Posterior cingulate gyrus (tissue), 11 donors: ENCODE measurements at regions of chr17 and their contacts with region 1.

Region 1: GRCh38 chr17:17206124-17206912 is at the start of gene PLD6:
- DNase-seq: peak; percentile 46 to 96 (median 64)

Region 2: DNA sequence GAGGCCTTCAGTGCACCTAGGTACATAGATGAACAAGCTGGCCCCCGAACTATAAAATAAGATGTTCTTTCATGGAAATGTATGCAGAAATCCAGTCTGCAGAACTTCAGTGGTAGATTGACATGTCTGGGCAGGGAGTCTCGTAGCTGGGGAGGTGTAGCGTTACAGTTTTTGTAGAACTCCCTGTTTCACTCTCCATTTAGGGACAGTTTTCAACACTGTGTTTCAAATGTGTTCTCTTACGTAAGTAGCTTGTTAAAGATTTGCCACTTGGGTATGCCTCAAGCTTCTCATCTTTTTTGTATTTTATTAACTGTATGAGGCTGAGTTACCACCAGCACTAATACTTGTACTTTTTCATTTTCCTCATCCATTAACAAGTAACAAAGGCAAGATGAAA is 46.7 kb before region 1 on chr17:
- intact Hi-C with region 1: no loop called
- DNase-seq: no peak

Region 3: GRCh38 chr17:17237026-17237799 is 30.9 kb after region 1 on chr17 and contains the start of gene FLCN:
- intact Hi-C with region 1: loop called (anchors 2 kb)
- DNase-seq: peak; percentile 90 to 99 (median 94)

Region 4: GRCh38 chr17:17280613-17281549 is 74.6 kb after region 1 on chr17 and contains the start of gene COPS3:
- intact Hi-C with region 1: loop called (anchors 2 kb)
- DNase-seq: peak; percentile 98 to 100 (median 99)